ENCODE measurements at regions of chr6 and their contacts with region 1.

Region 1: DNA sequence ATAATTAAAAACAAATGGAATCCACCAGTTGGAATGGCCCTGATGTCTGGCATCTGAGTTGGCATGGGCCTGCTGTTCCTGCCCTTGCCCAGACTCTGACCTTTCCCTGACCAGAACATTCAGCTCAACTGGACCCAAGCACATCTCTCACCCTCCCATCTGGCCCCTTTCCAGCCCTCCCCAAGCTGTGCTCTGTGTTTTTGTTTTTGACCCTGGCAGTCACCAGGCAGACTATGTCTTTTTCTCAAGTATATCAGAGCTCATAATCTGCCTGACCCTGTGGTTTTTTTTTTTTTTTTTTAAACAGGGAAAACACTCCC is 117.6 kb downstream of the TRDN start:
- DNase-seq: peak; percentile 80 to 93
- ATAC-seq: peak; percentile 85 to 88
- H3K4me3 ChIP-seq: peak overlapping the region in 2 of 4 donors; percentile 8 to 28
- H3K27ac ChIP-seq: peak overlapping the region; percentile 68 to 89 (median 83)
- H3K4me1 ChIP-seq: peaks cover 43 to 73% of the 10 kb centered on the region in 2 donors
- H3K27me3 ChIP-seq: no peaks in the 10 kb centered on the region
- CTCF ChIP-seq: no peak
- POLR2A ChIP-seq: no peak

Region 2: GRCh38 chr6:123402052-123402451 is 117.1 kb before region 1 on chr6:
- in situ Hi-C with region 1: no loop called
- intact Hi-C with region 1: no loop called
- DNase-seq: no peak
- ATAC-seq: no peak
- H3K4me3 ChIP-seq: no peak overlapping the region
- H3K27ac ChIP-seq: peak overlapping the region; percentile 1 to 66 (median 29)
- H3K4me1 ChIP-seq: peaks cover 0 to 12% of the 10 kb centered on the region in 2 donors
- H3K27me3 ChIP-seq: no peaks in the 10 kb centered on the region
- CTCF ChIP-seq: no peak
- POLR2A ChIP-seq: no peak

Region 3: GRCh38 chr6:123415844-123416468 is 103.2 kb before region 1 on chr6:
- in situ Hi-C with region 1: no loop called
- intact Hi-C with region 1: loop called (anchors 5 kb)
- DNase-seq: peak; percentile 26 to 64
- ATAC-seq: peak; percentile 62 to 78
- H3K4me3 ChIP-seq: no peak overlapping the region
- H3K27ac ChIP-seq: peak overlapping the region; percentile 45 to 76 (median 63)
- H3K4me1 ChIP-seq: peaks cover 55 to 87% of the 10 kb centered on the region in 2 donors
- H3K27me3 ChIP-seq: no peaks in the 10 kb centered on the region
- CTCF ChIP-seq: peak; percentile 69 to 83 (median 78)
- POLR2A ChIP-seq: no peak

Region 4: GRCh38 chr6:123619156-123619555 is 100.0 kb after region 1 on chr6:
- in situ Hi-C with region 1: no loop called
- intact Hi-C with region 1: loop called (anchors 5 kb)
- DNase-seq: peak; percentile 40 to 71
- ATAC-seq: peak; percentile 57 to 73
- H3K4me3 ChIP-seq: no peak overlapping the region
- H3K27ac ChIP-seq: peak overlapping the region; percentile 81 to 97 (median 92)
- H3K4me1 ChIP-seq: peaks cover 30 to 73% of the 10 kb centered on the region in 2 donors
- H3K27me3 ChIP-seq: no peaks in the 10 kb centered on the region
- CTCF ChIP-seq: no peak
- POLR2A ChIP-seq: no peak

Region 5: GRCh38 chr6:123636782-123637181 is 117.6 kb after region 1 on chr6 and contains the start of gene TRDN:
- in situ Hi-C with region 1: no loop called
- intact Hi-C with region 1: loop called (anchors 2 kb)
- DNase-seq: peak; percentile 52 to 74
- ATAC-seq: peak; percentile 76 to 84
- H3K4me3 ChIP-seq: peak within 1 kb of the TSS; percentile 46 to 62 (median 57)
- H3K27ac ChIP-seq: peak within 1 kb of the TSS; percentile 89 to 97 (median 92)
- H3K4me1 ChIP-seq: peaks cover 30 to 52% of the 10 kb centered on the region in 2 donors
- H3K27me3 ChIP-seq: no peaks in the 10 kb centered on the region
- CTCF ChIP-seq: no peak
- POLR2A ChIP-seq: peak in 1 of 2 donors; percentile 78
- total RNA-seq, gene TRDN: 190 to 628 (median 296) TPM

Measured in gastrocnemius medialis (tissue), 4 donors.